Endothelial cell of umbilical vein (primary cell): ENCODE measurements at regions of chr16 and their contacts with region 1.

Region 1: GRCh38 chr16:68538880-68539701 is at the start of gene ZFP90:
- DNase-seq: peak; percentile 85
- H3K4me3 ChIP-seq: peak within 1 kb of the TSS; percentile 69 to 78 (median 69)
- H3K27ac ChIP-seq: no peak within 1 kb of the TSS
- H3K4me1 ChIP-seq: peaks cover 8% of the 10 kb centered on the region
- H3K27me3 ChIP-seq: no peaks in the 10 kb centered on the region
- CTCF ChIP-seq: no peak
- POLR2A ChIP-seq: peak; percentile 81
- total RNA-seq, gene ZFP90: 18.4 and 22.4 TPM in 2 replicates

Region 2: DNA sequence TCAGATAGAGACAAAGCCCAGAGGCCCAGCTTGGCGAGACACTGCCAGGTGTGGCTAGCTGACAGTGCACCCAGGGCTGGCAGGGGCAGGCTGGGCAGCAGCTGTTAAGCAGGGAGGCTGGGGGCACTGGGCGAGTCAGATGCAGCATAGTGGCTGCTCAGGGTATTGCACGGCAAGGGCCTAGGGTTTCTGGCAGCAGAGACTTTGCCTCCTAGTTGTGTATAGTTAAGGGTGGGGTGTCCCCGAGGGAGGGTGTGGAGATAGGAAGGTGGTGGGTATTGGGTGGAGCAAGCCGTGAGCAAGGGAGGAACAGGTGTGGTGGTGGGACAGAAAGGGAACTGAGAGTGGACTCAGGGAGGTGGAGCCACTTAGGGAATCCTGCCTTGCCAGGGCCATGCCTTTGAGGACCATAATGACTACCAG is 156.8 kb before region 1 on chr16:
- CTCF ChIA-PET with region 1: no interaction called
- POLR2A ChIA-PET with region 1: no interaction called
- dilution Hi-C with region 1: no loop called
- intact Hi-C with region 1: no loop called
- DNase-seq: no peak
- H3K4me3 ChIP-seq: no peak overlapping the region
- H3K27ac ChIP-seq: no peak overlapping the region
- H3K4me1 ChIP-seq: no peaks in the 10 kb centered on the region
- H3K27me3 ChIP-seq: no peaks in the 10 kb centered on the region
- CTCF ChIP-seq: peak; percentile 32 to 43
- POLR2A ChIP-seq: no peak

Region 3: DNA sequence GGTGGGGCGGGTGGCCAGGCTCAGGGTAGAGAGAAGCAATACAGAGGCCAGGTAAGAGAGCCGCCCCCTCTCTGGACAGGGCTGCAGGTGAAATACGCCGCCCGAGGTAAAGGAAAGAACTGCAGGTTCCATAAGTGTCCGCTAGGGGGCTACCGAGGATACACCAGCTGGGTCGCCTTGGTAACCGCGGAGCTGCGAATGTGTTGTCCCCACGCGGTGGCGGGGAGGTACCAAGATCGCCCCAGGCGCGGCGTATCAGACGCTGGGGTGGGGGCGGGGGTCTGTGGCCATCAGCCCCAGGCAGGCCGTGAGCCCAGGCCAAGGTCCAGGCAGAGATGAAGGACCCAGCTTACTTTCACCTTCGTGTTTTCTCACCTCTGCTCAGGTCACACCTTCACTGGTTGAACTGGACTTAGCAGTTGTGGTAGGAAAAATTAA is 18.4 kb before region 1 on chr16:
- CTCF ChIA-PET with region 1: interaction called, 19 read pairs
- POLR2A ChIA-PET with region 1: no interaction called
- dilution Hi-C with region 1: no loop called
- intact Hi-C with region 1: no loop called
- DNase-seq: peak; percentile 76
- H3K4me3 ChIP-seq: no peak overlapping the region
- H3K27ac ChIP-seq: no peak overlapping the region
- H3K4me1 ChIP-seq: peaks cover 4% of the 10 kb centered on the region
- H3K27me3 ChIP-seq: no peaks in the 10 kb centered on the region
- CTCF ChIP-seq: peak; percentile 98 to 100
- POLR2A ChIP-seq: no peak